ENCODE measurements at regions of chr2 and their contacts with region 1.

Region 1: GRCh38 chr2:529425-529824 is 147.8 kb downstream of the TMEM18 start:
- DNase-seq: peak; percentile 85
- H3K4me3 ChIP-seq: no peak overlapping the region
- H3K27ac ChIP-seq: peak overlapping the region in 1 of 2 experiments; percentile 51; a peak in 1 of 4 replicates
- H3K4me1 ChIP-seq: no peaks in the 10 kb centered on the region; a peak in 1 of 4 replicates
- H3K27me3 ChIP-seq: no peaks in the 10 kb centered on the region
- CTCF ChIP-seq: peak; percentile 11
- EP300 ChIP-seq: no peak
- RAD21 ChIP-seq: peak; percentile 93

Region 2: GRCh38 chr2:501130-501529 is 28.3 kb before region 1 on chr2:
- CTCF ChIA-PET with region 1: interaction called, 10 read pairs
- POLR2A ChIA-PET with region 1: no interaction called
- DNase-seq: peak; percentile 59
- H3K4me3 ChIP-seq: no peak overlapping the region
- H3K27ac ChIP-seq: no peak overlapping the region
- H3K4me1 ChIP-seq: peaks cover 0 to 23% of the 10 kb centered on the region in 2 experiments; a peak in 2 of 4 replicates
- H3K27me3 ChIP-seq: no peaks in the 10 kb centered on the region
- CTCF ChIP-seq: no peak
- EP300 ChIP-seq: no peak
- RAD21 ChIP-seq: no peak

Region 3: DNA sequence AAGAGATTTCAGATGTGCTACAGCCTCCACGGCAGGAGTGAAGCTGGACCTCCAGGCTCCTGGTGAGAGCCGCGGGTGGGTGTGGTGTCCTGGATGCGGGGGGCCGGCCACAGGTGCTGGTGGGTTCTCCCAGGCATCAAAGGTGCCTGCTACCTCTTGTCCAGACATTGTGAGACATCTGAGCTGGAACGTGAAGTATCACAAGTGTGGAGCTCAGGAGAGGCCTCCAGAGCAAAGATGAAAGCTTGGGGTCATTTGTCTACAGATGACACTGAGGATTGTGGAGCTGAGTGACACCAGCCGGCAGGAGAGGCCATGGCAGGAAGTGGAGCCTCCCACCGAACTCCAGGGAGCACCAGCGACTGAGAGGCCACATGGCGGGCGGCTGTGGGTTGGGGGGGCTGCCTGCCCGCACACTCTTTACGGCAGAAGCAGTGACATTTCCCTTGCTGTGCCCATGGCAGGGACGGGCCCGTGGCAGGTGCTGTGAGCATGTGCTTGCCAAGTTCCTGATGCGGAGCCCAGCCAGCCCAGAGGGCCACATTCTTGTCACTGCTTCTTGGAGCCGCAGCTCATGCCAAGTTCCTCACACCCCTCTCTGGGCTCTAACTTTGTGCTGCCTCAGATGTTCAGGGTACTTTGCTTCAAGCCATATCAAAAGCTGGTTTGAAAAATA is 16.7 kb after region 1 on chr2:
- CTCF ChIA-PET with region 1: interaction called, 18 read pairs
- POLR2A ChIA-PET with region 1: no interaction called
- DNase-seq: peak; percentile 36
- H3K4me3 ChIP-seq: no peak overlapping the region
- H3K27ac ChIP-seq: no peak overlapping the region
- H3K4me1 ChIP-seq: peaks cover 0 to 3% of the 10 kb centered on the region in 2 experiments; a peak in 1 of 4 replicates
- H3K27me3 ChIP-seq: no peaks in the 10 kb centered on the region
- CTCF ChIP-seq: no peak
- EP300 ChIP-seq: no peak
- RAD21 ChIP-seq: no peak

Region 4: DNA sequence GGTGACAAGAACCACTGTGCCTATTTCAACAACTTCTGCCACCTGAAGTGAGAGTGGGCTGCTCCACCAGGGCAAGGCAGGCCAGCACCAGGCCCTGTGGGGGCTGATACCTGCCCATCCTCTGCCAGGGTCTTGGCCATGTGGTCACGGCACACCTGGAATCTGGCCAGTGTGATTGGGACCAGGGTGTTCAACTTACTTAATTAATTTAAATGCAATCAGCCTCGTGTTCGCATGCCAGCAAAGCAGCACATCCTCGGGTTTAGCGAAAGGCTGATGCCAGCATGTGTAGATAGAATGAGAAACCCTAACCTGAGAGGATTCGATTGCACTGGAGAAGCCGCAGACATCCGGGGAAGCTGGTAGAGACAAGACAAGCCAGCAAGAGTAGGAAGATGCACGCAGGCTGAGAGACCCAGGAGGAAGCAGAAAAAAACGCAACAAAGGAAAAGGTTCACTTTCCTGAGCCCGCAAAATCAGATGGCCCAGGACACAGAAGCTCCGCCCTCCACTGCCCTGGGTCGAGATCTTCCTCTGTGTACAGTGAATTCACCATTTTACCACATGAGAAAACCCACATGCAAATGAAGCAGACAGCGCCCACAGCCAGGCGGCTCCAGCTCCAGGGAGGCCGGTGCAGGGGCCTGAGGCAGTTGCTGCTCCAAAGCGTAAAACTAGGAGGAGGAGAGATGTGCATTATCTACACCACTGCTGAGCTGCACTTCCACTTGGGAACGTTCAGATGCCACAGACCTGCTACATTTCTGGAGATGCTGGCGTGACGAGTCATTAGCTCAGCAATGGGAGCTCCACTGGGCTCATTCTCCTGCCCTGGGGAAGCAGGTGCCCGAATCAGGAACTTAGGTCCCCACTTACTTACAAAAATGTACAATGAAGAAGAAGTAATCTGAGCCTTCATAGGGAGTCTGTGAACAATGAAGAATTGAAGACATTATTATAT is 55.7 kb after region 1 on chr2:
- CTCF ChIA-PET with region 1: interaction called, 10 read pairs
- POLR2A ChIA-PET with region 1: no interaction called
- DNase-seq: no peak
- H3K4me3 ChIP-seq: no peak overlapping the region
- H3K27ac ChIP-seq: peak overlapping the region in 1 of 2 experiments; percentile 74; a peak in 2 of 4 replicates
- H3K4me1 ChIP-seq: peaks cover 0 to 39% of the 10 kb centered on the region in 2 experiments; a peak in 2 of 4 replicates
- H3K27me3 ChIP-seq: no peaks in the 10 kb centered on the region
- CTCF ChIP-seq: no peak
- EP300 ChIP-seq: no peak
- RAD21 ChIP-seq: no peak

Region 5: DNA sequence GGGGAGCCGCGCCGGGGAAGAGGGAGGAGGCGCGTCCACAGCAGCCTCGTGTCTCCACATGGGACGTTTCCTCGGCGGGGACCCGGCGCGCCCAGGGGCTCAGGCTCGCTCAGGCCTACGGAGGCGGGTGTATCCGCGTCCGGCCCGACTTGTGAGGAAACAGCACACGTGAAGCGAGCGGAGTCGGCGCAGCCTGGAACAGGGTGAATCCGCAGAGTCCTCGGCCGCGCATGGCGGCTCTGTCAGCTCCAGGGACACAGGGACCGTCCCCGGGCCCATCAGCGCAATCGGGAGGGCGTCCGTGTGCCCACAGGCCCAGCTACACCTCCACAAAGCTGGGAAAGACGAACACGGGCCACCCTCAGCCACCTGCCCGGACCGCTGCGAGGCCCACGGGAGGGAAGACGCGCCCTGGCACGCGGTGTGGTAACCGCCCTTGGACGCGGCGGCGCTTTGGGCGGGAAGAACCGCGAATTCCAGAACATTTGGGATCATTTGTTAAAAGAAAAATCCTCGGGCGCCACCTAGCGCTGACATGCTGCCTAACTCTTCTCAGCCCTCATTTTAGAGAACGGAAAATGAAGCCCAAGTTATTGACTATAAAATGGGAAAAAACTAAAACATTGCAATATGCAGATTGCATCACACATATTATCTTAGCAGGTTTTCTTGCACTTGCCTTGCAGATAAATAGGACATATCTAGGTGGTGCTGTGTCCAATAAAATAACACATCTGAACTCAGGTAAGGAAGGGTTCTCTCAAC is 107.4 kb after region 1 on chr2:
- CTCF ChIA-PET with region 1: interaction called, 124 read pairs
- POLR2A ChIA-PET with region 1: no interaction called
- DNase-seq: peak; percentile 89
- H3K4me3 ChIP-seq: no peak overlapping the region
- H3K27ac ChIP-seq: peak overlapping the region in 1 of 2 experiments; percentile 39; a peak in 1 of 4 replicates
- H3K4me1 ChIP-seq: peaks cover 0 to 11% of the 10 kb centered on the region in 2 experiments; a peak in 2 of 4 replicates
- H3K27me3 ChIP-seq: no peaks in the 10 kb centered on the region
- CTCF ChIP-seq: peak; percentile 82
- EP300 ChIP-seq: no peak
- RAD21 ChIP-seq: peak; percentile 96

Region 6: DNA sequence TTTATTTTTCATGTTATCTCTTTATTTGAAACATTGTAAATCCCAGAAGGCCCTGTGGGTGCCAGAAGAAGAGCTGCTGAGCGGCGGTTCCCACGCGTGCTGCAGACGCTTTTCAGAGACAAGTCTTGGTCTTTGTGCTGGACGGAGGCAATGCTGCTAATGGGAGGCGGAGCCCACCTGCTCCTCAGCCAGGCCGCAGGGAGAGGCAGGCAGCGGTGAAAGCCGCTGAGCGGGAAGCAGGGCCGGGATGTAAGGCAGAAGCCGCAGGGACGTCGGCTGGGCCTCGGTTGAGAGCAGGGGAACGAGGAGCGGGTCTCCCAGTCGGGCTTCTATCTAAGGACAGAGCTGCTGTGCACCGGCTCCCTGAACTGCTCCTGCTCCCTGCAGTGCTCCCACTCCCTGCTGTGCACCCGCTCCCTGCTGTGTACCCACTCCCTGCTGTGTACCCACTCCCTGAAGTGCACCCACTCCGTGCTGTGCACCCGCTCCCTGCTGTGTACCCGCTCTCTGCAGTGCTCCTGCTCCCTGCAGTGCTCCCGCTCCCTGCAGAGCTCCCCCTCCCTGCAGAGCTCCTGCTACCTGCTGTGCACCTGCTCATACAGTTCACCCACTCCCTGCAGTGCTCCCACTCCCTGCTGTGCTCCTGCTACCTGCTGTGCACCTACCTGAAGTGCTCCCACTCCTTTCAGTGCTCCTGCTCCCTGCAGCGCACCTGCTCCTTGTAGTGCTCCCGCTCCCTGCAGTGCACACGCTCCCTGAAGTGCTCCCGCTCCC is 131.3 kb after region 1 on chr2:
- CTCF ChIA-PET with region 1: interaction called, 21 read pairs
- POLR2A ChIA-PET with region 1: no interaction called
- DNase-seq: no peak
- H3K4me3 ChIP-seq: no peak overlapping the region
- H3K27ac ChIP-seq: no peak overlapping the region
- H3K4me1 ChIP-seq: no peaks in the 10 kb centered on the region
- H3K27me3 ChIP-seq: no peaks in the 10 kb centered on the region
- CTCF ChIP-seq: no peak
- EP300 ChIP-seq: no peak
- RAD21 ChIP-seq: no peak

Measured in SK-N-SH (cell line).